Activated T-helper 1 cell treated with anti-CD3 and anti-CD28 coated beads, Interleukin-12 subunit alpha, Interleukin-12 subunit beta, Interleukin-2, Interleukin-4 antibody, amounts not matched to agents 30 ng/mL and 10 ng/mL and 1 ng/mL, durations not matched to agents 14 hours and 24 hours and 36 hours (primary cell): ENCODE measurements at regions of chr12 and their contacts with region 1.

Region 1: DNA sequence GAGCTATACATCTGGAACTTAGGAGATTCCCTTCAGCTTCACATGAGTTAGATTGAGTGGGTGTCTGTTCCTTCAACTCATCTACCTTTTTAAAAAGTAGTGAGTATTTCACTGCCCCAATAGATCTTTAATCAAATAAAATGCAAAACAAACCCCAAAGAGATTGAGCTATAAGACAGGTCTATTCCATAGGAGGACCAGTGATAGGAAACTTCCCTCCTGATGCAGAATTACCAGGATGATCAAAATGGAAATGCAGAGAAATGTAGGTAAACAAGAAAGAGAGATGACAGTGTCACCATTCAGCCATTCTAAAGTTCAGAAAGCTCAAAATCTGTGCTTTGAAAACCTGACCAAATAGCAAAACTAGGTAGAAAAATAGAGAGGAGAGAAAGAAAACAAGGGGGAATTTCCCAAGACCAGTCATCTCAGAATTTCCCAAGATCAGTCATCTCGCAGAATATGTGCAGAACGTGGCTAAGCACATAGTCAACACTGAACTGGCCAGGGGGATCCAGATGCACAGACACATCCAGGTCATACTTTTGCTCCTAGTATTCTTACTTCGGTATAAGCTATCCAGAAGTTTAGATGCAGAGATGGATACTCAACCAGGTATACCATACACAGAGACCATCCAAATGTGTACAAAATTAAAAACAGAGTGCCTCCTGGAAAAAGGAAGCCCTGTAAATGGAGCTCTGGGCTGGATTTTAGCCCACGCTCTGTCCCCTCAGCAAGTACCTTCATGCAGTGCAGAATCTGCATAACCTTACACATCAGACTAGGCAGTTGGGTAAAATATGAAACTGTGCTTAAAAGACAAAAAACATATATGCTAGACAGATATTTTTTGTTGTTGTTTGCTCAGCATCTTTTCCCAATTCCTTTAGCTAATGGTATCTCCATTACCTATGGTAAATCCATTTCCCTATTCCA is 27.4 kb downstream of the SLC41A2 start:
- DNase-seq: peak; percentile 47
- H3K4me3 Mint-ChIP-seq: peak overlapping the region; percentile 11
- H3K27ac Mint-ChIP-seq: peak overlapping the region; percentile 87
- H3K4me1 Mint-ChIP-seq: peaks cover 38% of the 10 kb centered on the region
- H3K27me3 Mint-ChIP-seq: peaks cover 2% of the 10 kb centered on the region

Region 2: GRCh38 chr12:104215638-104216297 is 714.9 kb before region 1 on chr12 and contains the start of gene TXNRD1:
- intact Hi-C with region 1: loop called (anchors 1 kb)
- DNase-seq: peak; percentile 79
- H3K4me3 Mint-ChIP-seq: peak within 1 kb of the TSS; percentile 82
- H3K27ac Mint-ChIP-seq: peak within 1 kb of the TSS; percentile 55
- H3K4me1 Mint-ChIP-seq: peaks cover 44% of the 10 kb centered on the region
- H3K27me3 Mint-ChIP-seq: peaks cover 6% of the 10 kb centered on the region
- total RNA-seq, gene TXNRD1: 93.3 and 103 TPM in 2 replicates

Region 3: GRCh38 chr12:104680066-104680465 is 250.6 kb before region 1 on chr12:
- intact Hi-C with region 1: loop called (anchors 5 kb)
- DNase-seq: no peak
- H3K4me3 Mint-ChIP-seq: no peak overlapping the region
- H3K27ac Mint-ChIP-seq: peak overlapping the region; percentile 85
- H3K4me1 Mint-ChIP-seq: peaks cover 84% of the 10 kb centered on the region
- H3K27me3 Mint-ChIP-seq: no peaks in the 10 kb centered on the region

Region 4: GRCh38 chr12:104740668-104741067 is 190.0 kb before region 1 on chr12:
- intact Hi-C with region 1: loop called (anchors 2 kb)
- DNase-seq: peak; percentile 40
- H3K4me3 Mint-ChIP-seq: peak overlapping the region; percentile 71
- H3K27ac Mint-ChIP-seq: peak overlapping the region; percentile 82
- H3K4me1 Mint-ChIP-seq: peaks cover 75% of the 10 kb centered on the region
- H3K27me3 Mint-ChIP-seq: no peaks in the 10 kb centered on the region

Region 5: DNA sequence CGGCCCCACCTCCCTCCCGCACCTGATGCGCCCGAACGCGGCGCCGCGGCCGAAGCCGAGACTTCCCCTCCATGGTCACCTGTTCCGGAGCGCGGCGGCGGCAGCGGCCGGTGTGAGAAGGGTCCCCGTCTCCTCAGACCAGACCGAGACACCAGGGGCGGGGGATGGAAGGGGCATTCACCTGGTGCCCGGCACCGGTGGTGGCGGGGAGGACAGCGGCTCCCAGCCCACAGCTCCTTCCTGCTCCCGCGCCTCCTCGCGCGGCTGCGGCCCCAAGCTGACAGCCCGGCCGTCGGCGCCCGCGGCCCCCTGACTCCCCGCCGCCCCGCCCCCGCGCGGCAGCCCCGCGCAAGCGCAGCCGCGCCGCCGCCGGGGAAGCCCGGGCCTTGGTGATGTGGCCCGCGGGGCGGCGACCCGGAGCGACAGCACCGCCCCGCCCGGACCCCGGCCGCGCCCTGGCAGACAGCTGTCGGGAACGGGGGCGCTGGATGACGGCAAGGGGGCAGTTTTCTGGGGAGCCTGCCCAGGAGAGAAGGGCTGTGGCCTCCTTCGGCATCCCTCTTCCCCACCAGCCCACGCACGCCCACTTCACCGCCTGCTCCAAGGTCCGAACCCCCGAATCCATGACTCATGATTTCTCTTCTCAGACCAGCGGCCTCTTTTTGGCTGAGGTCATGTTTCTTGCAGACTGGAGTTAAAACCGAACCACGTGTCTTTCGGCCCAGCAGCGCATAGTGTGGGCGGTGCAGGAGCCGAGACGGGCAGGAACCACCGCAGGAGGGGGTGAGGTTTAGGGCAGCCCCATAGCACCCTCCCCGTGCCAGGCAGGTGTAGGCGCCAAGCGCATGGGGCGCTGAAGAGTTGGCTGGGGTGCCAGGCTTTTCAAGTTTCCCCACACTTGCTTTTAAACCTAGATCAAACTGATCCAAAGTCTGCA is 27.6 kb after region 1 on chr12 and contains the start of gene SLC41A2:
- intact Hi-C with region 1: loop called (anchors 1 kb)
- DNase-seq: peak; percentile 80
- H3K4me3 Mint-ChIP-seq: peak within 1 kb of the TSS; percentile 90
- H3K27ac Mint-ChIP-seq: peak within 1 kb of the TSS; percentile 96
- H3K4me1 Mint-ChIP-seq: peaks cover 44% of the 10 kb centered on the region
- H3K27me3 Mint-ChIP-seq: peaks cover 24% of the 10 kb centered on the region
- total RNA-seq, gene SLC41A2: 16.4 and 19.0 TPM in 2 replicates

Region 6: GRCh38 chr12:105036937-105037649 is 106.4 kb after region 1 on chr12:
- intact Hi-C with region 1: loop called (anchors 1 kb)
- DNase-seq: no peak
- H3K4me3 Mint-ChIP-seq: no peak overlapping the region
- H3K27ac Mint-ChIP-seq: peak overlapping the region; percentile 46
- H3K4me1 Mint-ChIP-seq: peaks cover 41% of the 10 kb centered on the region
- H3K27me3 Mint-ChIP-seq: no peaks in the 10 kb centered on the region